ENCODE measurements at regions of chr12 and their contacts with region 1.

Region 1: DNA sequence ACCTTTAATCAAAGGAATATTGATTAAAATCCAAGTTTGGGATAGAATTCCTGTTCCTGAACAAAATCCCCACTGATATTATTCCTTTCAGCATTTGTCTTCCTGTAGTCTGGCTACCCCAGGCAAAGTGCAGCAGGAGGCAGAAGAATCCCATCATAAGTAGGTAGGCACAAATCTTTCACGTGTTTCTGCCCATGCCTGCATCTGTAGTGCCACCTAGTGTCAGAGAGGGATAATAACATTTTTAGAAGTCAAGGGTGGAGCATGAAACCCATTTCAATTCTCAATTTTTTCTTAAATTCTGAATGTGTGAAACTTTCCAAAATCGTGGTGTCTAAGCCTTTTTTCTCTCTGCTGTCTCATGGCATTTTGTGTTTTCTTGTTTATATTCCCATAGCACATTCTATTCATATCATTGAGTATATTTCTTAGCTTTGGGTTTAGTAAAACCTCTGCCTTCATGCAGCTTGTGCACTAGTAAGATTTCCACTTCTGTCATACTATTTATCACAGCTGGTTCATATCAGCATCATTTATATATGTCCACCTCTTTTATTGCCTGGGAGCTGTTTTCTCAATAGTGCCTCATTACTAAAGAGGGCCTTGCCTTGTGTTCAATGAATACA is 47.8 kb upstream of the RERG start:
- DNase-seq: no peak
- ATAC-seq: peak; percentile 59

Region 2: GRCh38 chr12:14723763-14724162 is 545.3 kb before region 1 on chr12:
- intact Hi-C with region 1: loop called in 1 of 2 experiments (anchors 10 kb)
- DNase-seq: peak; percentile 51
- ATAC-seq: peak; percentile 87 to 98

Region 3: DNA sequence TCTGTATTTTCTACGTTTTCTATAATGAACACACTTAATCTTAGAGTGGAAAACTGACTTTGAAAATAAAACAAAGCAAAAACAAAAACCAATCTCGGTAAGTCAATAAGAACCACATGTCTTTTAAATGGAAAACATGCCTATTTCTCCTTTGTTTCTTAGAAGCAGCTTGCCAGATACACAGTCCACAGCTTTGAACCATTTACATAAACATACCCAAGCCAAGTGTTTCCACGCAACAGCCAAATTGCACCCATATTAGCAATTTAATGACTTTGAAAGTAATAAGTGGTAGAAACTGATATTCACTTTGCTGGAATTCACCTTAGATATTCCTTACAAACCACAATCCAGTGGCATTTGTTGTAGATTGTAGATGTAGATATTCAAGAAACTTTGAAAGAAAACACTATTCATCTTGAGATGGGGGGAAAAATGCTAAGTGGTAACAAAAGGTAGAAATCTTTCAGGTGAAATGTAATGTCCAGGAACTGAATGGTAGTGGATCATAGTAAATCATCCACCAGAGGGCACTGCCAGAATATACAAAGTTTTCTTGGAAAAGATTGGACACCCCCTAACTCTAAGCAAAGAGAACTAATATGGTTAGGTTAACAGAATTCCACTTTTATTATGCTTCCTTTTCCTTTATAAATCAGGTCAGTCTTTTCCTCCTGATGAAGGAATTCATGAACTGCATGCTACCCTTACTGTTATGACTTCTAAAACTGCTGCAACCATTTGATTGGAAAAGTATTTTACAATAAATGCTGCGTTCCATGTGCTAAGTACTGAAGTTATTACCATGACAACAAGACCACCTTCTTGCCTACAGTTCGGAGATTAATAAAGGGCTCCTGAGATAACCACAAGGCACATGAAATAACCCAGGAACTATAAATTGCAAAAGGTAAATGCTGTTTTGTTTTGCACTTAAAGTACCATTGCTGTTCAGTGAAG is 117.6 kb before region 1 on chr12:
- intact Hi-C with region 1: loop called in 1 of 2 experiments (anchors 5 kb)
- DNase-seq: no peak
- ATAC-seq: peak; percentile 63 to 80

Region 4: GRCh38 chr12:15227004-15227679 is 41.9 kb before region 1 on chr12:
- intact Hi-C with region 1: loop called in 1 of 2 experiments (anchors 2 kb)
- DNase-seq: peak; percentile 52
- ATAC-seq: peak; percentile 63 to 70

Region 5: GRCh38 chr12:15404485-15404884 is 135.4 kb after region 1 on chr12:
- intact Hi-C with region 1: no loop called
- DNase-seq: no peak
- ATAC-seq: peak in 1 of 2 donors; percentile 63

Measured in left cardiac atrium (tissue), 4 donors.